Ascending aorta (tissue), 2 donors: ENCODE measurements at regions of chr10 and their contacts with region 1.

Region 1: GRCh38 chr10:27155066-27155754 is at the start of gene MASTL:
- DNase-seq: peak; percentile 79 to 98
- H3K4me3 ChIP-seq: peak within 1 kb of the TSS; percentile 78 to 90
- H3K27ac ChIP-seq: peak within 1 kb of the TSS; percentile 98 to 100
- H3K4me1 ChIP-seq: peaks cover 3 to 18% of the 10 kb centered on the region in 2 donors
- H3K27me3 ChIP-seq: no peaks in the 10 kb centered on the region
- CTCF ChIP-seq: no peak
- total RNA-seq, gene MASTL: 11.8 TPM

Region 2: GRCh38 chr10:26931223-26931622 is 224.0 kb before region 1 on chr10:
- intact Hi-C with region 1: no loop called
- DNase-seq: no peak
- H3K4me3 ChIP-seq: peak overlapping the region; percentile 37 to 40
- H3K27ac ChIP-seq: no peak overlapping the region
- H3K4me1 ChIP-seq: peaks cover 0 to 4% of the 10 kb centered on the region in 2 donors
- H3K27me3 ChIP-seq: no peaks in the 10 kb centered on the region
- CTCF ChIP-seq: no peak

Region 3: DNA sequence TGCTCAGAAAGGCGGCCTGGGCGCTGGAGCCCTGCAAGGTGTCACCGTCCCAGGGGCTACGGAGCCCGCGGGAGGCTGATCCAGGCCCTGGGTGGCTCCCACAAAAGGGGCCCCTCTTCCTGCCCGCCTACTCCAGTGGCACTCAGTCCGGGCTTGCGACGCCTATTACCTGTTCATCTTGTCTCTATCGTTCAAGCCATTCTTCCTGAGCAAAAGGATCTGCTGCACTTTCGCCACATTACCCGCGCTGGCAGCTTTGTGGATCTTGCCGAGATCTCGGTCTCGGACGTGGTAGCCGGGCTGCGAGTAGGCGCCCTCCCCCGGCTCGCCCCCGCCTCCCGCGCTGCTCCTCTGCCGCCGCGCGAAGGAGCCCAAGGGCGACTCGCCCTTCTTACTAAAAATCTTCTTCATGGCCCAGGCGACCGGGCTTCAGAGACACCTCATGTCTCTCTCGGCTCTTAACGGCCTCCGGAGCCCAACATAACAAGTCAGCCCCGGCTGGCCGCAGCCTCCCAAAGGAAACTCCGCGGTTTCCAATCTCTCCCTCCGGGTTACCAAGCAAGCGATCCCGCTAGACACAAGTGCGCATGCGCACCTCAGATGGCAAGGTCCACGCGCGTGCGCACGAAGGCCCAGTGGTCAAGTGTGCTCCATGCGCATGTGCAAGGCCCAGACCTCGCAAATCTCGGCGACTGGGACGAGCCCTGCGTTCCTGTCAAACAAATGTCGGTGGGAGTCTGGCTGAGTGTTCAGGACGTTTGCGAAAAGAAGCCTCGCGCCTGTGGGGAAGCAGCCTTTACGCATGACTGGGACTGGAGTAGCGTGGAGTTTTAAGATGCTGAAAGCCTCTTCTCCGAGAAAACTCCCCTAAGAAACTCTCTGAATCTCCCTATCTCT is 55.0 kb before region 1 on chr10 and contains the start of gene ANKRD26:
- intact Hi-C with region 1: loop called (anchors 1 kb)
- DNase-seq: peak; percentile 90 to 99
- H3K4me3 ChIP-seq: peak within 1 kb of the TSS; percentile 66 to 74
- H3K27ac ChIP-seq: peak within 1 kb of the TSS; percentile 84 to 85
- H3K4me1 ChIP-seq: peaks cover 0 to 6% of the 10 kb centered on the region in 2 donors
- H3K27me3 ChIP-seq: no peaks in the 10 kb centered on the region
- CTCF ChIP-seq: no peak
- total RNA-seq, gene ANKRD26: 2.4 TPM

Region 4: DNA sequence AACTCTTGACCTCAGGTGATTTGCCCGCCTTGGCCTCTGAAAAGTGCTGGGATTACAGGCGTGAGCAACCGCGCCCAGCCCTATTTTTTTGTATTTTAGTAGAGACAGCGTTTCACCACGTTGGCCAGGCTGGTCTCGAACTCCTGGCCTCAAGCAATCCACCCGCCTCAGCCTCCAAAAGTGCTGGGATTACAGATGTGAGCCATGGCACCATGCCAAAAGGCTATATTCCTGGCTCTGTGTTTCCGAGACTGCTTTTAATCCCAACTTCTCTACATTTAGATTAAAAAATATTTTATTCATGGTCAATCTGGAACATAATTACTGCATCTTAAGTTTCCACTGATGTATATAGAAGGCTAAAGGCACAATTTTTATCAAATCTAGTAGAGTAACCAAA is 43.9 kb before region 1 on chr10:
- intact Hi-C with region 1: loop called (anchors 5 kb)
- DNase-seq: no peak
- H3K4me3 ChIP-seq: no peak overlapping the region
- H3K27ac ChIP-seq: no peak overlapping the region
- H3K4me1 ChIP-seq: no peaks in the 10 kb centered on the region
- H3K27me3 ChIP-seq: no peaks in the 10 kb centered on the region
- CTCF ChIP-seq: no peak

Region 5: DNA sequence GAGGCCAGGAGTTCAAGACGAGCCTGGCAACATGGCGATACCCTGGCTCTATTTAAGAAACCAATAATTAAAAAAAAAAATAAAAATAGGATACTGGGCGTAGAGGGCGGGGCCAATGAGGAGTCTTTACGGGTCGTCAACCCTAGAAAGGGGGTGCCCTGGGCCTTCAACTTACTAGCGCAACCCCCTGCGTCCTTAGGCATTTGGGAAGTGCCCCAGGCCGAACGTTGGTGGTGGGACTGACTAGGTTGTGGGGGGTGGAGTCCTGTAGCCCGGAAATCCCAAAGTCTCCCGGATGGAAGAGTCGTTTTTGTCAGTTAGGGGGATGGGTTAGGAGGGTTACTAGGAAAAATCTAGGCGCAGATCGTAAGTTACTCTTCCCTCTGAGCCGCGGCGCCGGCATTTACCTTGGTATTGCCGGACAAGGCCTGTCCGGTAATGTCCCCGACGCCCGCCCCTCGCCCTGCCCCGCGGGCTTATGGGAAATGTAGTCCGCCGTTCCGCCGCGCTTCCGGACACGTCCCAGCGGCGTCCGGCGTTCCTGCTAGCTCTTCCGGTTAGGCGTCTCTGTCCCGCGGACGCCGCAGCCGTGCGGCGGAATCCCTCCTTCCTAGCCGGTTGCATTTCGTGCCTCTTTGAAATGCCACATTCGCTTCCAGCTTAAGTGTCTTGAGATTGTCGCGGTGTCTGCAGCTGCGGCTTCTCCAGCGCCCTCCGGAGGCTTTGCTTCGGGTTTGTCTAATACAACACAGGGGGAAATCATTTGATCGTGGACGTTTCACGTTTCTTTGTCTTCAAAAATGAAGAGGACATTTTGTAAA is 86.7 kb after region 1 on chr10:
- intact Hi-C with region 1: loop called (anchors 1 kb)
- DNase-seq: peak; percentile 48 to 94
- H3K4me3 ChIP-seq: peak overlapping the region; percentile 79 to 86
- H3K27ac ChIP-seq: peak overlapping the region; percentile 96 to 98
- H3K4me1 ChIP-seq: peaks cover 0 to 18% of the 10 kb centered on the region in 2 donors
- H3K27me3 ChIP-seq: no peaks in the 10 kb centered on the region
- CTCF ChIP-seq: peak; percentile 26 to 50 (median 38)